ENCODE measurements at regions of chr12 and their contacts with region 1.

Region 1: DNA sequence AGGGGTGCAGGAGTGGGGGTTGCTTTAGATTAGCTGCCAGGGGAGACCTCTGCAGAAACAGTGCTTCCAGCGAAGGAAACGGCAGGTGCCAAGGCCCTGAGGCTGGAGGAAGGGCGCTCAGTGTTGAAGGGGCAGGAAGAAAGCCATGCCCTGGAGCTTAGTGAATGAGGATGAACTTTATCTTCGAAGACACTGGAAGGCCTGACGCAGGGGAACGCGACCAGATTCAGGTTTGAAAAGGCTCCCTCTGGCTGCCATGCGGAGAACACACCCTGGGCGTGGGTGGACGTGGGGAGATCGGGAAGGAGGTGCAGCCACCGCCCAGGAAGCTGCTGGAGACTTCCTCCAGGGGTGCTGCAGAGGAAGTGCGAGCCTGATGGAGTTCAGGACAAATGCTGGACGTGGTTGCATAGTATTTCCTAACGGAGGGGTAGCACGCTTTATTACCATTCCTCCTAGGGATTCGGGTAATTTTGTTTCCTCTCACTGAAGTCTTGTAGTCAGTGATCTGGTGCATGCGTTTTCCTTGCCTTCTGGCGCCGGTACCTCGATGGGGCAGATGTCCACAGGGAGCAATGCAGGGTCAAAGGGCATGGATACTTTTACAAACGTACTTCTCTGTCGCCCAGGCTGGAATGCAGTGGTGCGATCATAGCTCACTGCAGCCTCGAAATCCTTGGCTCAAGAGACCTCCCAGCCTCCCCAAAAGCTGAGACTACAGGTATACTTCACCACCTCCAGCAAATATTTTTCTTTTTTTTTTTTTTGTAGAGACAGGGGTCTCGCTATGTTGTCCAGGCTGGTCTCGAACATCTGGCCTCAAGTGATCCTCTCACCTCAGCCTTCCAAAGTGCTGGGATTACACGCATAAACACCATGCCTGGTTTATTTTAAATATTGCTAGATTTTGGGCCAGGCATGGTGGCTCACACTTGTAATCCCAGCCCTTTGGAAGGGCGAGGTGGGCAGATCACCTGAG is 26.4 kb upstream of the UBC start:
- DNase-seq: peak; percentile 53 to 91 (median 82)
- ATAC-seq: peak; percentile 64
- H3K4me3 ChIP-seq: peak overlapping the region; percentile 65 to 81
- H3K4me3 Mint-ChIP-seq: no peak overlapping the region
- H3K27ac ChIP-seq: peak overlapping the region; percentile 46 to 79
- H3K27ac Mint-ChIP-seq: no peak overlapping the region
- H3K4me1 ChIP-seq: peaks cover 23% of the 10 kb centered on the region
- H3K4me1 Mint-ChIP-seq: peaks cover 11% of the 10 kb centered on the region
- H3K27me3 ChIP-seq: no peaks in the 10 kb centered on the region
- H3K27me3 Mint-ChIP-seq: no peaks in the 10 kb centered on the region
- CTCF ChIP-seq: peak; percentile 88

Region 2: GRCh38 chr12:124863416-124864325 is 77.2 kb before region 1 on chr12 and contains the start of gene SCARB1:
- CTCF ChIA-PET with region 1: interaction called, 5 read pairs
- POLR2A ChIA-PET with region 1: no interaction called
- intact Hi-C with region 1: loop called in 1 of 2 experiments (anchors 5 kb)
- DNase-seq: peak; percentile 63 to 89 (median 73)
- ATAC-seq: peak; percentile 94
- H3K4me3 ChIP-seq: peak within 1 kb of the TSS; percentile 46 to 81
- H3K4me3 Mint-ChIP-seq: peak within 1 kb of the TSS; percentile 81
- H3K27ac ChIP-seq: peak within 1 kb of the TSS; percentile 15 to 46
- H3K27ac Mint-ChIP-seq: peak within 1 kb of the TSS; percentile 57
- H3K4me1 ChIP-seq: peaks cover 15% of the 10 kb centered on the region
- H3K4me1 Mint-ChIP-seq: peaks cover 23% of the 10 kb centered on the region
- H3K27me3 ChIP-seq: no peaks in the 10 kb centered on the region
- H3K27me3 Mint-ChIP-seq: no peaks in the 10 kb centered on the region
- CTCF ChIP-seq: no peak
- total RNA-seq, gene SCARB1: 3.0 to 3.2 TPM

Region 3: GRCh38 chr12:124917135-124917840 is 23.6 kb before region 1 on chr12:
- CTCF ChIA-PET with region 1: interaction called, 323 read pairs
- POLR2A ChIA-PET with region 1: interaction called, 312 read pairs
- intact Hi-C with region 1: loop called (anchors 1 kb)
- DNase-seq: peak; percentile 79 to 98 (median 91)
- ATAC-seq: peak; percentile 73
- H3K4me3 ChIP-seq: peak overlapping the region; percentile 31 to 40
- H3K4me3 Mint-ChIP-seq: peak overlapping the region; percentile 82
- H3K27ac ChIP-seq: peak overlapping the region; percentile 87 to 89
- H3K27ac Mint-ChIP-seq: peak overlapping the region; percentile 97
- H3K4me1 ChIP-seq: peaks cover 62% of the 10 kb centered on the region
- H3K4me1 Mint-ChIP-seq: peaks cover 87% of the 10 kb centered on the region
- H3K27me3 ChIP-seq: no peaks in the 10 kb centered on the region
- H3K27me3 Mint-ChIP-seq: no peaks in the 10 kb centered on the region
- CTCF ChIP-seq: no peak

Region 4: DNA sequence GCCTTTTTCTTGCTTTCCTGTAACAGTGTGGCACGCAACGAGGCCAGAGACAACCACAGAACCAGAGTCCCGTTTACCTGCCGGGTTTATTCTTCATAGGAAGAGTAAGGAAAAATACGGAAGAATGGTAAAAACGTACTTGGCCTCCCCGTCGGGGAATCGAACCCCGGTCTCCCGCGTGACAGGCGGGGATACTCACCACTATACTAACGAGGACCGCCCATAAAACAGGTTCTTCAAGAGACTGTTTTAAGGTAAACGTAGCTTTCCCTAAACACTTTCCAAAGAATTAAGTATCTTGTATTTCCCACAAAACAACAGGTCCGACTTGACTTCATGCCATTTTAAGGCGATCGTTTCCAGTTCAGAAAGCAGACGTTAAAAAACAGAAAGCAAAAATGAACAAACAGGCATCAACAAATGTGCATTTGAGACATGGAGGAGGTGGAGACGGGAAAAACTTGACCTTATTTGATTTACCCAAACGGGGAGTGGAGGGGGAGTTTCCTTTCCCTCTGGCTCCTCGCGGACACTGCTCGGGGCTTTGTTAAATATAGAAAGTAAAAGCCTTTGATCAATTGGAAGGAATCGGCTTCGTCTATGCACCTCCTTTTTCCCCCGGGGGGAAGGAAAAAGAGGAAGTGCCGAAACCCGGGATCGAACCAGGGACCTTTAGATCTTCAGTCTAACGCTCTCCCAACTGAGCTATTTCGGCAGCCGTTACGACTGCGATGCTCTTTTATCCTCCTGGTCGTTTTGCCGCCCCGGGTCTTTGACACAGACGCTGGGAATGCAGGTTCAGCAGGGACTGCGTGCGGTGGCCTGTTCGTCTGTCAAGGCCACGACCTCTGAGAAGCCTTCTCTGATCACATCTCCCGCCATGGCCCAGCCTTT is 13.4 kb before region 1 on chr12:
- CTCF ChIA-PET with region 1: interaction called, 323 read pairs
- POLR2A ChIA-PET with region 1: interaction called, 312 read pairs
- intact Hi-C with region 1: loop called (anchors 1 kb)
- DNase-seq: peak; percentile 84 to 96 (median 91)
- ATAC-seq: peak; percentile 84
- H3K4me3 ChIP-seq: peak overlapping the region; percentile 71
- H3K4me3 Mint-ChIP-seq: peak overlapping the region; percentile 93
- H3K27ac ChIP-seq: peak overlapping the region; percentile 51 to 55
- H3K27ac Mint-ChIP-seq: peak overlapping the region; percentile 96
- H3K4me1 ChIP-seq: peaks cover 18% of the 10 kb centered on the region
- H3K4me1 Mint-ChIP-seq: peaks cover 22% of the 10 kb centered on the region
- H3K27me3 ChIP-seq: no peaks in the 10 kb centered on the region
- H3K27me3 Mint-ChIP-seq: no peaks in the 10 kb centered on the region
- CTCF ChIP-seq: no peak

Region 5: GRCh38 chr12:124952801-124953200 is 12.0 kb after region 1 on chr12:
- CTCF ChIA-PET with region 1: interaction called, 14 read pairs
- POLR2A ChIA-PET with region 1: no interaction called
- intact Hi-C with region 1: no loop called
- DNase-seq: no peak
- ATAC-seq: no peak
- H3K4me3 ChIP-seq: no peak overlapping the region
- H3K4me3 Mint-ChIP-seq: no peak overlapping the region
- H3K27ac ChIP-seq: no peak overlapping the region
- H3K27ac Mint-ChIP-seq: no peak overlapping the region
- H3K4me1 ChIP-seq: no peaks in the 10 kb centered on the region
- H3K4me1 Mint-ChIP-seq: no peaks in the 10 kb centered on the region
- H3K27me3 ChIP-seq: no peaks in the 10 kb centered on the region
- H3K27me3 Mint-ChIP-seq: no peaks in the 10 kb centered on the region
- CTCF ChIP-seq: no peak

Measured in CD8-positive, alpha-beta T cell (primary cell).